CD8-positive, alpha-beta T cell (primary cell): ENCODE measurements at regions of chr20 and their contacts with region 1.

Region 1: GRCh38 chr20:44521484-44522481 is at the start of gene SERINC3:
- DNase-seq: peak; percentile 96 to 99 (median 98)
- ATAC-seq: peak; percentile 93
- H3K4me3 ChIP-seq: peak within 1 kb of the TSS; percentile 88 to 100
- H3K4me3 Mint-ChIP-seq: peak within 1 kb of the TSS; percentile 86
- H3K27ac ChIP-seq: peak within 1 kb of the TSS; percentile 98 to 100
- H3K27ac Mint-ChIP-seq: peak within 1 kb of the TSS; percentile 96
- H3K4me1 ChIP-seq: peaks cover 52% of the 10 kb centered on the region
- H3K4me1 Mint-ChIP-seq: peaks cover 55% of the 10 kb centered on the region
- H3K27me3 ChIP-seq: no peaks in the 10 kb centered on the region
- H3K27me3 Mint-ChIP-seq: no peaks in the 10 kb centered on the region
- CTCF ChIP-seq: no peak
- total RNA-seq, gene SERINC3: 39.0 to 46.0 TPM

Region 2: DNA sequence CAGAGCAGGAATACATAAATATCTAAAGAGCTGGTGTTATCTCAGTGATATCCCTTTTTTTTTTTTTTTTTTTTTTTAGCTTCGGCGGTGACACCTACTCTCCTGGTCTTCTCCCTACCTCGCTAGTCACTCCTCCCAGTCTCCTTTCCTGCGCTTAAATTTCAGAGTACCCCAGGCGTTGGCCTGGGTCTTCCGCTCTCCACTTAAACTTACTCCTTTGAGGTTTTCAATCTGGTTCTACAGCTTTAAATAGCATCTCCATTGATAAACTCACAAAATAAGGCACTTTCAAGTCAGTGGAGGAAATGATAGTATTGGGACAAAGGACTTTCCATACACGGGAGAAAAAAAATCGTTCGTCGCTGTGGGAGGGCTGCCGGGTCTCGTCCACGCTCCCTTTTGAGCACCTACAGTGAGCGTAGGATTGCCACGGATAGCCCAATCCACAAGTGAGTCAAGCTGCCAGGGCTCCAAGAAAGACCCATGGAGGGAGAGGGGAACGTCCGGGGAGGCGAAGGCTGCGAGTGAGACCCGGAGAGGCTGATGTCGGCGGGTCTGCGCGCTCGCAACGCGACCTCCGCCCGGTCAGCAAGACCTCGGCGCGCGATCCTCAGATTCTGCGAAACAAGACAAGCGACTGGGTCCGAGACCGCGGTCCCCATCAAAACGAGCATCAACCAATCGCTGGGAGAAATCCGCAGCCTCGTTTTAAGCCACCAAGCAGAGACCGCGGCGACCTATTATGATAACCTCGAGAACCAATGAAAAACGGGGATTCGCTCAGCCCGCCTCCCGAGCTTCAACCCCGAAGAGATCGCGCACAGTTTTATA is 1064.8 kb before region 1 on chr20:
- CTCF ChIA-PET with region 1: no interaction called
- POLR2A ChIA-PET with region 1: no interaction called
- intact Hi-C with region 1: loop called in 1 of 2 experiments (anchors 5 kb)
- DNase-seq: peak; percentile 68 to 94 (median 87)
- ATAC-seq: peak; percentile 79
- H3K4me3 ChIP-seq: peak overlapping the region; percentile 97 to 100
- H3K4me3 Mint-ChIP-seq: peak overlapping the region; percentile 92
- H3K27ac ChIP-seq: peak overlapping the region; percentile 98 to 100
- H3K27ac Mint-ChIP-seq: peak overlapping the region; percentile 98
- H3K4me1 ChIP-seq: peaks cover 16% of the 10 kb centered on the region
- H3K4me1 Mint-ChIP-seq: peaks cover 36% of the 10 kb centered on the region
- H3K27me3 ChIP-seq: no peaks in the 10 kb centered on the region
- H3K27me3 Mint-ChIP-seq: peaks cover 8% of the 10 kb centered on the region
- CTCF ChIP-seq: no peak

Region 3: GRCh38 chr20:44475694-44476560 is 45.9 kb before region 1 on chr20 and contains the start of gene TTPAL:
- CTCF ChIA-PET with region 1: interaction called, 6 read pairs
- POLR2A ChIA-PET with region 1: interaction called, 4 read pairs
- intact Hi-C with region 1: loop called (anchors 1 kb)
- DNase-seq: peak; percentile 72 to 95 (median 88)
- ATAC-seq: peak; percentile 96
- H3K4me3 ChIP-seq: peak within 1 kb of the TSS; percentile 82 to 90
- H3K4me3 Mint-ChIP-seq: peak within 1 kb of the TSS; percentile 86
- H3K27ac ChIP-seq: peak within 1 kb of the TSS; percentile 94 to 96
- H3K27ac Mint-ChIP-seq: peak within 1 kb of the TSS; percentile 95
- H3K4me1 ChIP-seq: peaks cover 16% of the 10 kb centered on the region
- H3K4me1 Mint-ChIP-seq: peaks cover 27% of the 10 kb centered on the region
- H3K27me3 ChIP-seq: no peaks in the 10 kb centered on the region
- H3K27me3 Mint-ChIP-seq: no peaks in the 10 kb centered on the region
- CTCF ChIP-seq: peak; percentile 26
- total RNA-seq, gene TTPAL: 12.3 TPM

Region 4: GRCh38 chr20:44532259-44532980 is 10.6 kb after region 1 on chr20:
- CTCF ChIA-PET with region 1: no interaction called
- POLR2A ChIA-PET with region 1: interaction called, 7 read pairs
- intact Hi-C with region 1: loop called (anchors 1 kb)
- DNase-seq: no peak
- ATAC-seq: peak; percentile 13
- H3K4me3 ChIP-seq: peak overlapping the region; percentile 53 to 69
- H3K4me3 Mint-ChIP-seq: no peak overlapping the region
- H3K27ac ChIP-seq: peak overlapping the region; percentile 31 to 66
- H3K27ac Mint-ChIP-seq: no peak overlapping the region
- H3K4me1 ChIP-seq: peaks cover 28% of the 10 kb centered on the region
- H3K4me1 Mint-ChIP-seq: peaks cover 7% of the 10 kb centered on the region
- H3K27me3 ChIP-seq: peaks cover 0 to 3% of the 10 kb centered on the region in 2 experiments
- H3K27me3 Mint-ChIP-seq: no peaks in the 10 kb centered on the region
- CTCF ChIP-seq: no peak

Region 5: DNA sequence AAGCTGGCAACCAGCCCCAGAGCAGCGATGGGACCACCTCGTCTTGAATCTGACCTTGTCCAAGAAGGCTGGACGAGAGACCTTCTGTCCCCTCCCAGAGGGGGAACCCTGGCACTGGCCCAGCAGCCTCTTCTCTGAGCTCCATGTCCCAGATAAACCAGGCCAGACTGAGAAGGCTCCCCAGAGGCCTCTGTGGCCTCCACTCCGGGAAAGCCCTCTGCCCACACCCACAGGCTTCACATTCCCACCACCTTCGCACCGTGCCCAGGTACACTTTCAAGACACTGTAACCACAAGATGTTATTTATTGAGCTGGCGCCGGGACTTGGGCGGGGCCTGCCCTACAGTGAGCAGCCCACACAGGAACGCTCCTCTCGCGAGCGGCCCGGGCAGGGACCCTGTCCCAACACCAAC is 96.5 kb after region 1 on chr20:
- CTCF ChIA-PET with region 1: no interaction called
- POLR2A ChIA-PET with region 1: no interaction called
- intact Hi-C with region 1: no loop called
- DNase-seq: peak in 8 of 9 experiments; percentile 23 to 73 (median 55)
- ATAC-seq: peak; percentile 74
- H3K4me3 ChIP-seq: no peak overlapping the region
- H3K4me3 Mint-ChIP-seq: peak overlapping the region; percentile 47
- H3K27ac ChIP-seq: peak overlapping the region; percentile 17 to 55
- H3K27ac Mint-ChIP-seq: peak overlapping the region; percentile 93
- H3K4me1 ChIP-seq: peaks cover 61% of the 10 kb centered on the region
- H3K4me1 Mint-ChIP-seq: peaks cover 58% of the 10 kb centered on the region
- H3K27me3 ChIP-seq: no peaks in the 10 kb centered on the region
- H3K27me3 Mint-ChIP-seq: no peaks in the 10 kb centered on the region
- CTCF ChIP-seq: no peak

Region 6: DNA sequence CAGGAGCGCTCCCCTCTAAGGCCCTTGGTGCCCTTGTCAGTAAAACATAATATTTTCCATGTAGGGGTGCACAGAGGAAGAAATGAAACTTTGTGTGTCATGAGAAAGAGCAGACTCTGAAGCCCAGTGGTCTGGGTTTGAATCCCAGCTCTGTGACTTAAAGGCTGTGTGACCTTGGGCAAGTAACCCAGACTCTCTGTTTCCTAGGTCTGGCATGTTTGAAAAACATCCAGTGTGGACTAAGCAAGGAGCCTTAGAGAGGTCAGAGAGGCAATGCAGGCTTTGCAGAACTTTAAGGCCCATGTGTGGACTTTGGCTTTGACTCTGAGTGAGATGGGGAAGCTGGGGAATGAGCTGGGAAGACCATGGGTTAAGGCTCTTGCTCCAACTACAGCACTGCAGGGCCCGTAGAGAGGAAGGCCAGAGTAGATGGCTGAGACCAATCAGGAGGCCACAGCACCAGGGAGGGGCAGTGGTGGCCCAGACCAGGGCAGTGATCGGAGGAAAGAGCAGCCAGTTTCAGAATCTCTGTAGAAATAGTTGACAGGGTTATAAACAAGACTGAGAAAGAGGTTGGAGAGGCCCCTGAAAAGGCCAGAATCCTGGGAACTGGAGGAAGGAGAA is 111.5 kb after region 1 on chr20:
- CTCF ChIA-PET with region 1: no interaction called
- POLR2A ChIA-PET with region 1: no interaction called
- intact Hi-C with region 1: no loop called
- DNase-seq: no peak
- ATAC-seq: no peak
- H3K4me3 ChIP-seq: no peak overlapping the region
- H3K4me3 Mint-ChIP-seq: no peak overlapping the region
- H3K27ac ChIP-seq: no peak overlapping the region
- H3K27ac Mint-ChIP-seq: no peak overlapping the region
- H3K4me1 ChIP-seq: no peaks in the 10 kb centered on the region
- H3K4me1 Mint-ChIP-seq: no peaks in the 10 kb centered on the region
- H3K27me3 ChIP-seq: no peaks in the 10 kb centered on the region
- H3K27me3 Mint-ChIP-seq: no peaks in the 10 kb centered on the region
- CTCF ChIP-seq: no peak

Region 7: DNA sequence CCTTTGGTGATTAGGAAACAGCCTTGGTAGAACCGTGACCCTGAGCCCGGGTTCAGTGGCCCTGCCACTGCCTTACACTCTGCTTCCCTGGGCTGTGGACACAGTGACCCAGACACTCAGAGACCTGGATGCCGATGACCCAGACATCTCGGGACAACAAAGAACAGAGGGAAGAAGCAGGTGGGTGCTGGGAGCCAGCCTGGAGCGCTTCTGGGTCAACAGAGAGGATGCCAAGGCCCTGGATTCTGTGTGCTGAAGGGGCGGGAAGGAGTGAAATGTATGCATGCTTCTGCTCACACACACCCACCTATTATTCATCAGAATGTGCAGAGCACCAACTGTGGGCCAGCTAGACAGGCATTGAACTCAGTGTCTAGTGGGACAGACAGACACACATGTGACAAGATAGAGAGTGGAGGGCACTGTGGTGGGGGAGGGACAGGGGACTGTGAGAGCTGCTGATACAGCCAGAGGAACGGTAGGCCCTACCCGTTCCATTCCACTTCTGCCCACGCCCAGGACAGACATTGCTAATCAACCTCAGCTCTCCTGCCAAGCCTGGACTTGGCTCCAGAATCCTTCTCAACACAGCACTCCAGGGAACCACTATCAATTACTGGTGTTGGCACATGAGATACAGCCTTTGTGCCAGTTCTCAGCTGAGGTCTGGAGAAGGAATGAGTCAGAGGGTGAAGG is 244.0 kb after region 1 on chr20:
- CTCF ChIA-PET with region 1: no interaction called
- POLR2A ChIA-PET with region 1: no interaction called
- intact Hi-C with region 1: no loop called
- DNase-seq: no peak
- ATAC-seq: no peak
- H3K4me3 ChIP-seq: no peak overlapping the region
- H3K4me3 Mint-ChIP-seq: no peak overlapping the region
- H3K27ac ChIP-seq: no peak overlapping the region
- H3K27ac Mint-ChIP-seq: no peak overlapping the region
- H3K4me1 ChIP-seq: no peaks in the 10 kb centered on the region
- H3K4me1 Mint-ChIP-seq: no peaks in the 10 kb centered on the region
- H3K27me3 ChIP-seq: no peaks in the 10 kb centered on the region
- H3K27me3 Mint-ChIP-seq: peaks cover 6% of the 10 kb centered on the region
- CTCF ChIP-seq: no peak

Region 8: GRCh38 chr20:45415774-45416637 is 894.2 kb after region 1 on chr20 and contains the start of gene PIGT:
- CTCF ChIA-PET with region 1: no interaction called
- POLR2A ChIA-PET with region 1: no interaction called
- intact Hi-C with region 1: loop called in 1 of 2 experiments (anchors 10 kb)
- DNase-seq: peak; percentile 77 to 98 (median 89)
- ATAC-seq: peak; percentile 96
- H3K4me3 ChIP-seq: peak within 1 kb of the TSS; percentile 87 to 98
- H3K4me3 Mint-ChIP-seq: peak within 1 kb of the TSS; percentile 94
- H3K27ac ChIP-seq: peak within 1 kb of the TSS; percentile 70 to 90
- H3K27ac Mint-ChIP-seq: peak within 1 kb of the TSS; percentile 96
- H3K4me1 ChIP-seq: peaks cover 15% of the 10 kb centered on the region
- H3K4me1 Mint-ChIP-seq: peaks cover 40% of the 10 kb centered on the region
- H3K27me3 ChIP-seq: no peaks in the 10 kb centered on the region
- H3K27me3 Mint-ChIP-seq: no peaks in the 10 kb centered on the region
- CTCF ChIP-seq: no peak
- total RNA-seq, gene PIGT: 213 to 230 TPM